B cell (primary cell): ENCODE measurements at regions of chr1 and their contacts with region 1.

Region 1: DNA sequence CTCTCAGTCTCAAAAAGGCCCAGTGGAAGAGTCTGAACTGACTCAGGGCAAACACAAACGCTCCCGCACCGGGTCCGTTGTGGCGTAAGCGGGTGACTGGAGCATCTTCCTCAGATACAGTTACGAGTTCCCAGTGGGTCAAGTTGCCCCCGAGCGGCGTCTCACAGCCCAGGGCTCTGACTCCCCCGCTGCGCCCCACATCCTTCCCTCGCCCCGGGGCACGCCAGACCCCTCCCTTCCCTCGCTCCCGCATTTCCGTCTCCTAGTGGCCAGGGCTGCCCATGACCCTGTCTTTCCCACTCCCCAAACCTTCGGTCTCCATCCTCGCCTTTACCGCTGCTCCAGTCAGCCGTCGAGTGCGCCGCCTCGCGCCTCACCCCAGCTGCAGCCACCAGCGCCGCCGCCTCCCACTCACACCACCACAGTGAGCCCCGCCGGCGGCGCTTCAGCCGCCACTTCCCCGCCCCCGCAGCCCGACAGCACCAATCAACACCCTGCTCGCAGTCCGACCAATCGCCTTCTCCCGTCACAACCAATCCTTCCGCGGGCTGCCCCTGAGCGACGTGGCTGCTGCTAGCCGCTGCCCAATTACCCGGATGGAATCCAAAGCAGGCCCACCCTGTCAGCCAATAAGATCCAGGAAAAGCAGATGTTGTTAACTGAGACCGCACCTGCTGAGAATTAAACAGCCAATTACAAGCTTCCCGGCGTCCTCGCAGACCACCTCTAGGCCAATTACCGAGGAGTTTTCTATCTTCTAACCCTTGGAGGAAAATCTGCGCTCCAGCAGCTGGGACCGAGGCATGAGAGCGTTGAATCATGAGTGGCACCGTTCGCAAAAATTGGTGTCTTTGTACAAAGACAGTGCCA is at the start of gene TDRKH:
- DNase-seq: peak; percentile 99
- ATAC-seq: peak; percentile 93
- H3K4me3 ChIP-seq: peak within 1 kb of the TSS; percentile 72 to 97 (median 91)
- H3K4me3 Mint-ChIP-seq: peak within 1 kb of the TSS; percentile 96
- H3K27ac ChIP-seq: peak within 1 kb of the TSS; percentile 15 to 67
- H3K27ac Mint-ChIP-seq: peak within 1 kb of the TSS; percentile 89
- H3K4me1 ChIP-seq: peaks cover 9 to 10% of the 10 kb centered on the region in 2 donors
- H3K4me1 Mint-ChIP-seq: peaks cover 26% of the 10 kb centered on the region
- H3K27me3 ChIP-seq: no peaks in the 10 kb centered on the region
- H3K27me3 Mint-ChIP-seq: no peaks in the 10 kb centered on the region
- CTCF ChIP-seq: peak; percentile 14
- total RNA-seq, gene TDRKH: 12.8 and 13.3 TPM in 2 replicates

Region 2: DNA sequence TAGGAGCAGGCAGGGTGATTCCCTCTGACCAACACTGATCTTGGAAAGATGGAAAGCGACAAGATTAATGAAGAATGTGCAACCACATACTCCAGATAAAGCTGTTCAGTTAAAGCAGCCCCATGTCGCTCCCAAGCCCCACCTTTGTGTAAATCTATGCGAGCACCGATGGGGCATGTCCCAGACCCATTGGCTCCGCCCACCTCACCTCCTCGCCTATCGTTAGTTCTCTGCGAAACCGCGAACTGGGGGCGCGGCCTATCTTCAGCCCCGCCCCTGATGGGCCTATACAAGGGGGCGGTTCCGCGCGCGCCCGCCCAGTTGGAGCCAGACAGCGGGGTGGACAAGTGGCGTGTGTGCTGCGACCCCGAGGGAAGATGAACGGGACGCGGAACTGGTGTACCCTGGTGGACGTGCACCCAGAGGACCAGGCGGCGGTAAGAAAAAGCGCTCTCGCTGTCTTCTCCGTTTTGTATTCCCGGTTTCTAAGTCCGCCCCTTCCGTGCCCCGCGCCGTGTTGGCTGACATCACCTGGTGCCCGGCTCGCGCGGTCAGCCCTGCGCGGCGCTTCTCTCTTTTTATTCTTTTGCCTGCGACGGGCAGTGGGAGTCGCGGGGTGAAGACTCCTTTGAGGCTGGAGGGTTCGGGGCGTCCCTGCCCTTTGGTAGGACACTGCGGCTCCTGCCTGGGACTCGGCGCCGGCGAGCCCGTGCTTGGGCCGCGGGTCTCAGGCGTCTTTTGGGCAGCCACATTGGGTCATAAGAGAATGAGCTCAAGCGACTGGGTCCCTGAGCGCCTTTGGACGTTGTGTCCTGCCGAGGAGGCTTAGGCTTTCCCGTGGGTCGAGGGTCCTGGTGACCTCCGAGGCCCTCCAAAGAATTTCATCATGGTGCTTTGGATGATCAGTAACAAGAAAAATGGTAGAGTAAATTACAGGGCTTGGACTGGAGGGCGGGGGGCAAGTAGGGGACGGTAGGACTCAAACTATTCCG is 250.0 kb before region 1 on chr1 and contains the start of gene TUFT1:
- CTCF ChIA-PET with region 1: no interaction called
- POLR2A ChIA-PET with region 1: no interaction called
- intact Hi-C with region 1: loop called (anchors 1 kb)
- DNase-seq: peak; percentile 96
- ATAC-seq: peak; percentile 99
- H3K4me3 ChIP-seq: peak within 1 kb of the TSS; percentile 39 to 85 (median 75)
- H3K4me3 Mint-ChIP-seq: peak within 1 kb of the TSS; percentile 98
- H3K27ac ChIP-seq: peak within 1 kb of the TSS; percentile 54 to 61
- H3K27ac Mint-ChIP-seq: peak within 1 kb of the TSS; percentile 89
- H3K4me1 ChIP-seq: peaks cover 15 to 22% of the 10 kb centered on the region in 2 donors
- H3K4me1 Mint-ChIP-seq: peaks cover 19% of the 10 kb centered on the region
- H3K27me3 ChIP-seq: peaks cover 0 to 21% (median 10%) of the 10 kb centered on the region in 4 experiments
- H3K27me3 Mint-ChIP-seq: peaks cover 14% of the 10 kb centered on the region
- CTCF ChIP-seq: no peak
- total RNA-seq, gene TUFT1: 2.2 TPM in 2 replicates

Region 3: DNA sequence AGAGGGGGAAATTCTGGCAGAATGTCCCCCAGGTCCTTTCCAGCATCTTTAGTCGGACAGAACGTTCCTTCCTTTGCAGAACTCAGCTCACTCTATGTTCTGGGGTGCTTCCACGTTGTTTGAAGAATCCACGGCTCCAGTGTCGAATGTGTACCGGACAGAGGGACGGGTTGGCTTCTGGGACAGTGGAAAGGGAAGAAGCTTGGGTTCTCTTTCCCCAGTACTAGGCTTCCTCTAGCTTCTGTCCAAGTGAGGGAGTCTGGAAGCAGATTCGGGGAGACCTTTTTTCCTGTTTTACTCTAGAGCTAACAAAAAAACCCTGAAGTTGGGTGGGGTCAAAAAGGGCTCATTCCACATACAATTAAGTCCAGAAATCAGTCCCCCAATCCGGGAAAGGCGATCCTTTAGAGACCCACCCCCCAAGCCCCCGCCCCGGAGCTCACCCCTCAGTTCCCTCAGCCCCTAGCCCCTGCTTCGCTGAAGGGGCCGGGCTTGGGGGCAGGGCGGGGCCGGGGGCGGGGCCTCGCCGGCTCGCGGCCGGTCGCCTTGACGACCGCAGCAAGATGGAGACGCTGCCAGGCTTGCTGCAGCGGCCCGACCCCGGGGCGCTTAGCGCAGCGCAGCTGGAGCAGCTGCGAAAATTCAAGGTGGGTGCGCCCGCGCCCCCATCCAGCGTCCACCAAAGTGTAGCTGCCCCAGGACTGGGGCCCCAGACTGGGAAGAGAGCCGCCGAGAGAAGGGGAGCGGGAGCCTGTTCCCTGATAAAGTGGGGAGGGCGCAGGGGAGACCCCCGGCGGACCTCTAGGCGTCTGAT is 69.1 kb before region 1 on chr1 and contains the start of gene RIIAD1:
- CTCF ChIA-PET with region 1: no interaction called
- POLR2A ChIA-PET with region 1: interaction called, 3 read pairs
- intact Hi-C with region 1: loop called (anchors 1 kb)
- DNase-seq: peak; percentile 65
- ATAC-seq: peak; percentile 93
- H3K4me3 ChIP-seq: peak within 1 kb of the TSS; percentile 47 to 68 (median 58)
- H3K4me3 Mint-ChIP-seq: peak within 1 kb of the TSS; percentile 85
- H3K27ac ChIP-seq: peak within 1 kb of the TSS; percentile 38
- H3K27ac Mint-ChIP-seq: peak within 1 kb of the TSS; percentile 12
- H3K4me1 ChIP-seq: peaks cover 20 to 27% of the 10 kb centered on the region in 2 donors
- H3K4me1 Mint-ChIP-seq: peaks cover 27% of the 10 kb centered on the region
- H3K27me3 ChIP-seq: peaks cover 0 to 57% (median 32%) of the 10 kb centered on the region in 4 experiments
- H3K27me3 Mint-ChIP-seq: peaks cover 58% of the 10 kb centered on the region
- CTCF ChIP-seq: no peak
- total RNA-seq, gene RIIAD1: not detected in 2 replicates

Region 4: GRCh38 chr1:151839457-151840405 is 49.4 kb after region 1 on chr1 and contains the start of gene C2CD4D:
- CTCF ChIA-PET with region 1: interaction called, 6 read pairs
- POLR2A ChIA-PET with region 1: no interaction called
- intact Hi-C with region 1: loop called (anchors 1 kb)
- DNase-seq: peak; percentile 78
- ATAC-seq: peak; percentile 53
- H3K4me3 ChIP-seq: peak within 1 kb of the TSS in 4 of 5 experiments; percentile 36 to 56 (median 44)
- H3K4me3 Mint-ChIP-seq: peak within 1 kb of the TSS; percentile 87
- H3K27ac ChIP-seq: no peak within 1 kb of the TSS
- H3K27ac Mint-ChIP-seq: peak within 1 kb of the TSS; percentile 81
- H3K4me1 ChIP-seq: peaks cover 36 to 41% of the 10 kb centered on the region in 2 donors
- H3K4me1 Mint-ChIP-seq: peaks cover 38% of the 10 kb centered on the region
- H3K27me3 ChIP-seq: peaks cover 0 to 20% (median 7%) of the 10 kb centered on the region in 4 experiments
- H3K27me3 Mint-ChIP-seq: peaks cover 10% of the 10 kb centered on the region
- CTCF ChIP-seq: no peak
- total RNA-seq, gene C2CD4D: not detected in 2 replicates

Region 5: GRCh38 chr1:152047730-152048402 is 257.6 kb after region 1 on chr1:
- CTCF ChIA-PET with region 1: no interaction called
- POLR2A ChIA-PET with region 1: no interaction called
- intact Hi-C with region 1: loop called (anchors 5 kb)
- DNase-seq: peak; percentile 88
- ATAC-seq: peak; percentile 92
- H3K4me3 ChIP-seq: peak overlapping the region in 4 of 5 experiments; percentile 14 to 30 (median 19)
- H3K4me3 Mint-ChIP-seq: peak overlapping the region; percentile 76
- H3K27ac ChIP-seq: peak overlapping the region; percentile 93 to 97
- H3K27ac Mint-ChIP-seq: peak overlapping the region; percentile 97
- H3K4me1 ChIP-seq: peaks cover 17 to 19% of the 10 kb centered on the region in 2 donors
- H3K4me1 Mint-ChIP-seq: peaks cover 16% of the 10 kb centered on the region
- H3K27me3 ChIP-seq: no peaks in the 10 kb centered on the region
- H3K27me3 Mint-ChIP-seq: peaks cover 5% of the 10 kb centered on the region
- CTCF ChIP-seq: peak; percentile 48

Region 6: GRCh38 chr1:152252157-152252556 is 461.9 kb after region 1 on chr1:
- CTCF ChIA-PET with region 1: no interaction called
- POLR2A ChIA-PET with region 1: no interaction called
- intact Hi-C with region 1: no loop called
- DNase-seq: no peak
- ATAC-seq: no peak
- H3K4me3 ChIP-seq: no peak overlapping the region
- H3K4me3 Mint-ChIP-seq: no peak overlapping the region
- H3K27ac ChIP-seq: no peak overlapping the region
- H3K27ac Mint-ChIP-seq: no peak overlapping the region
- H3K4me1 ChIP-seq: no peaks in the 10 kb centered on the region
- H3K4me1 Mint-ChIP-seq: no peaks in the 10 kb centered on the region
- H3K27me3 ChIP-seq: no peaks in the 10 kb centered on the region
- H3K27me3 Mint-ChIP-seq: peaks cover 3% of the 10 kb centered on the region
- CTCF ChIP-seq: no peak